IMR-90 (cell line): ENCODE measurements at regions of chr16 and their contacts with region 1.

Region 1: GRCh38 chr16:67806428-67807147 is at the starts of genes RANBP10 and TSNAXIP1:
- DNase-seq: peak; percentile 99
- ATAC-seq: peak; percentile 96
- H3K4me3 ChIP-seq: peak within 1 kb of the TSS; percentile 76
- H3K27ac ChIP-seq: peak within 1 kb of the TSS; percentile 59
- H3K4me1 ChIP-seq: peaks cover 6% of the 10 kb centered on the region
- H3K27me3 ChIP-seq: no peaks in the 10 kb centered on the region
- CTCF ChIP-seq: no peak
- POLR2A ChIP-seq: peak; percentile 82
- RAD21 ChIP-seq: no peak
- total RNA-seq, gene RANBP10: 2.2 and 2.7 TPM in 2 replicates
- total RNA-seq, gene TSNAXIP1: 0.56 and 0.72 TPM in 2 replicates

Region 2: DNA sequence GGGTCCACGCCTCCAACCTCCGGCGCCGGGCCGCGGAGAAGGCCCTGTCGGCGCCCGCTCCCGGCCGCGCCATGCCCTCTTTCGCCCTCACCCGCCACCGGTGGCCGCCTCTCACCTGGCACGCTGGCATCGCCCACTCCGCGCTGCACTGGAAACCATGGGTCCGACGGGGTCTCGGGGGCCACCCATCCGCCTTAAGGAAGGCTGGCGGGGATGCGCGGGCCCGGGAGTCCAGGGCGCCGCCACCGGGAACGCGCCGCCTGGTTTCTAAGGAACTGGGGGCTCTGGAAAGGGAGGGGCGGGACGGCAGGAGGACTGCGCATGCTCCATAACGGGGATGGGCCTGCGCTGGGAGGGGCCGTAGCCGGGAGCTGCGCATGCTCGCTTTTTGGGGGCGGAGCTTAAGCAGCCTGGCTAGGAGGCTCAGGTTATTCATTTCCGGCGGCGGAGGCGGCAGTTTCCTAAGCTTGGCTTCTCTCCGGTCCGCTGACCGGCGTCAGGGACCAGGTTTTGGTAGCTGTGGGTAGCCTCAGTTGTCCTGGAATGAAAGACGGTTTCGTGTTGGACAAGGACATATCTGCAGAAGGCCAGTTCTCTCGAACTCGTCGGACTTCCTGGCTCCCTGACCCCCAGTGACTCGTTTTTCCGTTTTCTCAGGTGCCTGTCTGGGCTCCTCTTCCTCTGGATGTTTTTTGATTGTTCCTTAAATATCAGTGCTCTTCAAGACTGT is 87.4 kb before region 1 on chr16 and contains the start of gene GFOD2:
- CTCF ChIA-PET with region 1: no interaction called
- POLR2A ChIA-PET with region 1: no interaction called
- dilution Hi-C with region 1: no loop called
- in situ Hi-C with region 1: no loop called
- intact Hi-C with region 1: loop called (anchors 5 kb)
- DNase-seq: peak; percentile 92
- ATAC-seq: peak; percentile 93
- H3K4me3 ChIP-seq: peak within 1 kb of the TSS; percentile 89
- H3K27ac ChIP-seq: peak within 1 kb of the TSS; percentile 89
- H3K4me1 ChIP-seq: peaks cover 8% of the 10 kb centered on the region
- H3K27me3 ChIP-seq: no peaks in the 10 kb centered on the region
- CTCF ChIP-seq: no peak
- POLR2A ChIP-seq: peak; percentile 84
- RAD21 ChIP-seq: no peak; the same call in 1 of the 2 replicates
- total RNA-seq, gene GFOD2: 15.8 and 18.1 TPM in 2 replicates

Region 3: GRCh38 chr16:67979955-67980678 is 173.5 kb after region 1 on chr16 and contains the start of gene DPEP3:
- CTCF ChIA-PET with region 1: no interaction called
- POLR2A ChIA-PET with region 1: no interaction called
- dilution Hi-C with region 1: no loop called
- in situ Hi-C with region 1: no loop called
- intact Hi-C with region 1: no loop called
- DNase-seq: no peak
- ATAC-seq: no peak
- H3K4me3 ChIP-seq: no peak within 1 kb of the TSS
- H3K27ac ChIP-seq: no peak within 1 kb of the TSS
- H3K4me1 ChIP-seq: peaks cover 1% of the 10 kb centered on the region; the same call in 1 of the 2 replicates
- H3K27me3 ChIP-seq: peaks cover 29% of the 10 kb centered on the region
- CTCF ChIP-seq: peak; percentile 46
- POLR2A ChIP-seq: no peak
- RAD21 ChIP-seq: no peak
- total RNA-seq, gene DPEP3: not detected in 2 replicates